ENCODE measurements at regions of chr2 and their contacts with region 1.

Region 1: DNA sequence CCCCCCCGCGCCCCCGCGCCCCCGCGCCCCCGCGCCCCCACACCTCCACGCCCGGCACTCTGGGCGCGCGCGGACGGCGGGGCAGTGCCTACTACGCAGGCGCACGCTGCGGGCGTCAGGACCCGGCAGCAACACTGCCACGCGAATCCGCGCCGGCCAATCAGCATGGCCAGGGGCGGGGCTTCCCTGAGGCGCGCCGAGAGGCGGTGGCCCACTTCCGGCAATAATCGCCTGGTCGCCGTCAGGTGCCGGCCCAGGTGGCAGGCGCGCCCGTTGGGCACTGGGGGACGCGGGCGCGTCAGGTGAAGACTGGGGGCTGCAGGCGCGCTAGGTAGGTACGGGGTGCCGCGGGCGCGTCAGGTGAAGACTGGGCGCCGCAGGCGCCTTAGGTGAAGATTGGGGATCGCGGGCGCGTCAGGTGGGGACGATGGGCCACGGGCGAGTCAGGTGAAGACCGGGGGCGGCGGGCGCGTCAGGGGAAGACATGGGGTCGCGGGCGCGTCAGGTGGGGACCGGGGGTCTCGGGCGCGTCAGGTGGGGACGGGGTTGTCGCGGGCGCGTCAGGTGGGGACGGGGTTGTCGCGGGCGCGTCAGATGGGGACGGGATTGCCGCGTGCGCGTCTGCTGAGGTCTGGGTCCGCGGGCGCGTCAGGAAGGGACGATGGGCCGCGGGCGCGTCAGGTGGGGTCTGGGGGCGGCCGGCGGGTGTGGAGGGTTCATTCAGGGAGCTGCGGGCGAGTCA is 219.1 kb downstream of the RTP5 start:
- DNase-seq: peak; percentile 90 to 94 (median 92)
- ATAC-seq: peak; percentile 95
- H3K4me3 ChIP-seq: peak overlapping the region; percentile 55
- H3K4me3 Mint-ChIP-seq: peak overlapping the region; percentile 81 to 99 (median 88)
- H3K27ac ChIP-seq: peak overlapping the region; percentile 75
- H3K27ac Mint-ChIP-seq: peak overlapping the region; percentile 61 to 93 (median 89)
- H3K4me1 ChIP-seq: peaks cover 4 to 11% of the 10 kb centered on the region in 2 donors
- H3K4me1 Mint-ChIP-seq: peaks cover 27 to 57% (median 41%) of the 10 kb centered on the region in 7 donors
- H3K27me3 ChIP-seq: no peaks in the 10 kb centered on the region
- H3K27me3 Mint-ChIP-seq: peaks cover 0 to 18% (median 0%) of the 10 kb centered on the region in 5 donors

Region 2: DNA sequence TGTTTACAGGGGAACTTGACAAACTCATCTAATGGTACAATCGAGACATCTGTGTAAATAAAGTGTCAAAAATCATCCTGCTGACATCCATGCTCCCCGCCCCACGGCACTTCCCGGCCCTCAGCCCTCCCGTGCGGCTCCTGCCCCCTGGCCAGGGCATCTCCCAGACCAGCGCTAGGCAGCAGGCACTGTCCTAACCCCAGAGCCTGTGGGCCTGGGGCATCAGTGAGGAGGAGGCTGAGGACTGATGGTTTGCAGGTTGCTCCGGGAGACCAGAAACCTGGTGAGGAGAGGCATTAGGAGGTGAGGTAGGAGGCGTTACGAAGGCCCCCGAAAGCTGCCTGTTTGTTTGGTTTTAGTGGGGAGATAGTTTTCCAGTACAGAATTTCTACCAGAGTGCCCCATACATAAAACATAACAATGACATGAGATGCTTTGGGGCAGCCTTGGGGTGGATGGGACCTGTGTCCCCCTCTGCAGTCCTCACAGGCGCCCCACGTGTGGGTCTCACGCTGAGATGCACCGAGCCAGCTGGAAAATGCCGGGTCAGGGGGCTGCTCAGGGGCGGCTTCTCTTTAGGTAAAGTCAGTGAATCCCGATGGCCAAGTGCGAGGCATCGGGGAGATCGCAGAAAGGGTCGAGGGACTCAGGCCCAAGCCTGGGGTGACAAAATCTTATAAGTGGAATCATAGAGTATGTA is 104.9 kb before region 1 on chr2:
- CTCF ChIA-PET with region 1: no interaction called
- POLR2A ChIA-PET with region 1: no interaction called
- intact Hi-C with region 1: loop called in 1 of 2 experiments (anchors 2 kb)
- DNase-seq: no peak
- ATAC-seq: no peak
- H3K4me3 ChIP-seq: no peak overlapping the region
- H3K4me3 Mint-ChIP-seq: no peak overlapping the region
- H3K27ac ChIP-seq: no peak overlapping the region
- H3K27ac Mint-ChIP-seq: peak overlapping the region in 8 of 9 donors; percentile 21 to 95 (median 90)
- H3K4me1 ChIP-seq: peaks cover 13 to 14% of the 10 kb centered on the region in 2 donors
- H3K4me1 Mint-ChIP-seq: peaks cover 6 to 31% (median 23%) of the 10 kb centered on the region in 7 donors
- H3K27me3 ChIP-seq: no peaks in the 10 kb centered on the region
- H3K27me3 Mint-ChIP-seq: no peaks in the 10 kb centered on the region

Region 3: DNA sequence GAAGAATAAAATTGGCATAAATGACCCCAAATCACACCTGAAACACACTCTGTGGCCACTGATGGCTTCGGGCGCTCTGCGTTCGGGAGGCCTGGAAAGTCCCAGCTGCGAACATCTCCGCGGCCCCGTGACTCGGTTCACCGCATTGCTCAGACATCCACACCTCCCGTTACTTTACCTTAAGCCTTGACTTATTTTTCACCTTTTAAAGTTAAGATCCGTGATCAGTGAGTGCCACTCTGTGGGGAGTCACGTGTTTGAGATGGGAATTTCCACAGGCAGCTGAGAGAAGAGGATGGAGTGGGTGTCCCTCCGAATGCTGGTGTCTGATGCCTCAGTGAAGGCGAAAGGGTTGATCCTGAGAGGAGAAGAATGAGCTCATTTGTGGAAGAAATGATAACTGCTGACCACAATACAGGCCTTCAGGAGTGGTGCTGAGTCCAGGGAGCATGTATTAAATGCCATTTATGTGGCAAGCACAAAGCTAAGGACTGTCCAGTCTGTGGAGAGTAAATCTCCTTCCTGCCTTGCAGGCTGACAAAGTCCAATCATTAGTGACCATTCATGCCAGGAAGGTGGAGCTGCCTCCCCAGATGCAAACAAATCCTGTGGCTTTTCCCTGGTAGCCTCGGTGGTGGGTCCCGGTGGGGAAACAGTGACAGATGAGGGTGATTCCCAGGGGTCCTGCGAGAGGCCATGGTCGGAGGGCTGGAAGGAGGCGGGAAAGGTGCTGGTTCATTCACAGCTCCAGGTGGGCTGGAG is 50.3 kb before region 1 on chr2:
- CTCF ChIA-PET with region 1: no interaction called
- POLR2A ChIA-PET with region 1: no interaction called
- intact Hi-C with region 1: no loop called
- DNase-seq: no peak
- ATAC-seq: no peak
- H3K4me3 ChIP-seq: no peak overlapping the region
- H3K4me3 Mint-ChIP-seq: no peak overlapping the region
- H3K27ac ChIP-seq: no peak overlapping the region
- H3K27ac Mint-ChIP-seq: peak overlapping the region in 1 of 9 donors; percentile 55
- H3K4me1 ChIP-seq: no peaks in the 10 kb centered on the region
- H3K4me1 Mint-ChIP-seq: peaks cover 0 to 16% (median 9%) of the 10 kb centered on the region in 7 donors
- H3K27me3 ChIP-seq: no peaks in the 10 kb centered on the region
- H3K27me3 Mint-ChIP-seq: peaks cover 8 to 30% (median 13%) of the 10 kb centered on the region in 5 donors